CD8-positive, alpha-beta T cell (primary cell): ENCODE measurements at regions of chr16 and their contacts with region 1.

Region 1: GRCh38 chr16:1782352-1783091 is at the starts of genes NUBP2 and SPSB3:
- DNase-seq: peak; percentile 95 to 100 (median 98)
- ATAC-seq: peak; percentile 83
- H3K4me3 ChIP-seq: peak within 1 kb of the TSS; percentile 81 to 83
- H3K4me3 Mint-ChIP-seq: peak within 1 kb of the TSS; percentile 90
- H3K27ac ChIP-seq: peak within 1 kb of the TSS; percentile 73 to 86
- H3K27ac Mint-ChIP-seq: peak within 1 kb of the TSS; percentile 95
- H3K4me1 ChIP-seq: peaks cover 38% of the 10 kb centered on the region
- H3K4me1 Mint-ChIP-seq: peaks cover 29% of the 10 kb centered on the region
- H3K27me3 ChIP-seq: no peaks in the 10 kb centered on the region
- H3K27me3 Mint-ChIP-seq: no peaks in the 10 kb centered on the region
- CTCF ChIP-seq: no peak
- total RNA-seq, gene NUBP2: 33.1 to 39.2 TPM
- total RNA-seq, gene SPSB3: 70.3 to 72.3 TPM

Region 2: DNA sequence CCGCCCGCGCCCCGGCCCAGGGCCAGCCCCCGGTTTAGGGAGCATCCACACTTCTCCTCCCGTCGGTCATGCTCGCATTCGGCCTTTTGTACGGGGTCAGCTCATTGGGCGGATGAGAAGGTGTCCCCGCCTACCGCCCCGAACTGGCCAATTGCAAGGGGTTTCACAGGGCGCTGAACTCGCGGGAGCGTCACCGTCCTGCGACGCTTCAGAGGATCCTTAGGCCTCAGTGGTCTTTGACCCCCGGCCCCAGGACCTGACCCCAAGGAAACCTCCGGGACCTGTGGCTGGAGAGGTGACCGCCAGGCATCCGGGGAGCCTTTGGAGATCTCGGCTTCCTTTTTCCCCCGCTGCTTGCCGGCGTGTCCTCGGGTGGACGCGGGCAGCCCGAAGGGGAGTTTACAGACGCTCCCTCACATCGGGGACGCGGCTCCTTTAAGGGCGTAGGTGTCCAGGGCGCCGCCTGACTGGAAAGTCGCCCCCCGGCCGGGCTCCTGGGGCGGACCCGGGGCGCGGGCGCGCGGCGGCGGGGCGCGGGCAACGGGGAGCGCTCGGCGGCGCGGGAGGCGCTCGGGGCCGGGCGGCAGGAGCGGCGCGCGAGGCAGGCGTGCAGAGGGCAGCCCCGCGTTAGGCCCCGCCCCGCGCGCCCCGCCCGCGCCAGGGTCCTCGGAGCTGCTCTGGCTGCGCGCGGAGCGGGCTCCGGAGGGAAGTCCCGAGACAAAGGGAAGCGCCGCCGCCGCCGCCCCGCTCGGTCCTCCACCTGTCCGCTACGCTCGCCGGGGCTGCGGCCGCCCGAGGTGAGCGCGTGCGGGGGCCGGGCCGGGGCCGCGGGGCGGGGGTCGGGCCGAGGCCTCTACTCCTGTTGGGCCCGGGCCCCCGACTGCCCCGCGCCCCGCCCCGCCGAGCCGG is 473.3 kb before region 1 on chr16 and contains the start of gene UBE2I:
- CTCF ChIA-PET with region 1: no interaction called
- POLR2A ChIA-PET with region 1: interaction called, 5 read pairs
- intact Hi-C with region 1: loop called in 1 of 2 experiments (anchors 2 kb)
- DNase-seq: peak; percentile 96 to 99 (median 98)
- ATAC-seq: peak; percentile 73
- H3K4me3 ChIP-seq: peak within 1 kb of the TSS; percentile 82 to 95
- H3K4me3 Mint-ChIP-seq: peak within 1 kb of the TSS; percentile 92
- H3K27ac ChIP-seq: peak within 1 kb of the TSS; percentile 100
- H3K27ac Mint-ChIP-seq: peak within 1 kb of the TSS; percentile 100
- H3K4me1 ChIP-seq: peaks cover 50% of the 10 kb centered on the region
- H3K4me1 Mint-ChIP-seq: peaks cover 41% of the 10 kb centered on the region
- H3K27me3 ChIP-seq: no peaks in the 10 kb centered on the region
- H3K27me3 Mint-ChIP-seq: no peaks in the 10 kb centered on the region
- CTCF ChIP-seq: no peak
- total RNA-seq, gene UBE2I: 285 to 294 TPM

Region 3: DNA sequence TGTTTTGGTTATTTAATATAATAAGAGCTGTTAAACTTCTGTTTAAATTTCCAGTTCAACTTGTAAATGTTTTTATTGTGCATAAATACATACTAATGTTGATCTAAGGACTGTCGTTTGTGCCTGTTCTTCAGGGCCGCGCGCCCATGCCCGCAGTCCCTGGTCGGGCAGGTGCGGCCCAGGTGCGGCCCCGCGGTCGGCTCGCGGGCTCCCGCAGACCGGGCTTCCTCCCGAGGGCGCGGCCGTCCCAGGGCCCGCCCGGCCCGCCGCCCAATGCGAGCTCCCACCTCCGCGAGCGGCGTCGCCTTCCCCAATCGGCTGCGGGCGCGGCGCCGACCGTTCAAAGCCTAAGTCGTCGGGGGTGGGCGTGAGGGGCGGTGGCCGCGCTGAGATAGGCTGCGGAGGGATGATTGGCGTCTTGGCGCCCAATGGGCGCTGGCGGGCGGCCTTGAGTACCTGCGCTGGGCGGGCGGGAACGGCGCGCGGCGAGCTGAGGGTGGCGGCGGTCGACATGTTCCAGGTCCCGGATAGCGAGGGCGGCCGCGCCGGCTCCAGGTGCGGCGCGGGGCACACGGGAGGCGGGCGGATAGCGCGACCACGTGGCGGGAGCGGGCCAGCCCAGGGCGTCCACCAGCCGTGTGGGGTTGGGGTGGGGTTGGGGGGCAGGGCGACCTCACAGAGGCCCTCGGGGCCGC is 104.6 kb before region 1 on chr16 and contains the start of gene JPT2:
- CTCF ChIA-PET with region 1: no interaction called
- POLR2A ChIA-PET with region 1: no interaction called
- intact Hi-C with region 1: loop called in 1 of 2 experiments (anchors 1 kb)
- DNase-seq: peak; percentile 87 to 98 (median 95)
- ATAC-seq: peak; percentile 97
- H3K4me3 ChIP-seq: peak within 1 kb of the TSS; percentile 54 to 57
- H3K4me3 Mint-ChIP-seq: peak within 1 kb of the TSS; percentile 88
- H3K27ac ChIP-seq: peak within 1 kb of the TSS; percentile 31 to 37
- H3K27ac Mint-ChIP-seq: peak within 1 kb of the TSS; percentile 62
- H3K4me1 ChIP-seq: peaks cover 15% of the 10 kb centered on the region
- H3K4me1 Mint-ChIP-seq: peaks cover 27% of the 10 kb centered on the region
- H3K27me3 ChIP-seq: no peaks in the 10 kb centered on the region
- H3K27me3 Mint-ChIP-seq: no peaks in the 10 kb centered on the region
- CTCF ChIP-seq: no peak
- total RNA-seq, gene JPT2: 1.4 to 2.8 TPM

Region 4: GRCh38 chr16:1757714-1758404 is 24.7 kb before region 1 on chr16:
- CTCF ChIA-PET with region 1: no interaction called
- POLR2A ChIA-PET with region 1: no interaction called
- intact Hi-C with region 1: no loop called
- DNase-seq: no peak
- ATAC-seq: no peak
- H3K4me3 ChIP-seq: no peak overlapping the region
- H3K4me3 Mint-ChIP-seq: no peak overlapping the region
- H3K27ac ChIP-seq: no peak overlapping the region
- H3K27ac Mint-ChIP-seq: no peak overlapping the region
- H3K4me1 ChIP-seq: peaks cover 5% of the 10 kb centered on the region
- H3K4me1 Mint-ChIP-seq: peaks cover 6% of the 10 kb centered on the region
- H3K27me3 ChIP-seq: no peaks in the 10 kb centered on the region
- H3K27me3 Mint-ChIP-seq: no peaks in the 10 kb centered on the region
- CTCF ChIP-seq: no peak

Region 5: DNA sequence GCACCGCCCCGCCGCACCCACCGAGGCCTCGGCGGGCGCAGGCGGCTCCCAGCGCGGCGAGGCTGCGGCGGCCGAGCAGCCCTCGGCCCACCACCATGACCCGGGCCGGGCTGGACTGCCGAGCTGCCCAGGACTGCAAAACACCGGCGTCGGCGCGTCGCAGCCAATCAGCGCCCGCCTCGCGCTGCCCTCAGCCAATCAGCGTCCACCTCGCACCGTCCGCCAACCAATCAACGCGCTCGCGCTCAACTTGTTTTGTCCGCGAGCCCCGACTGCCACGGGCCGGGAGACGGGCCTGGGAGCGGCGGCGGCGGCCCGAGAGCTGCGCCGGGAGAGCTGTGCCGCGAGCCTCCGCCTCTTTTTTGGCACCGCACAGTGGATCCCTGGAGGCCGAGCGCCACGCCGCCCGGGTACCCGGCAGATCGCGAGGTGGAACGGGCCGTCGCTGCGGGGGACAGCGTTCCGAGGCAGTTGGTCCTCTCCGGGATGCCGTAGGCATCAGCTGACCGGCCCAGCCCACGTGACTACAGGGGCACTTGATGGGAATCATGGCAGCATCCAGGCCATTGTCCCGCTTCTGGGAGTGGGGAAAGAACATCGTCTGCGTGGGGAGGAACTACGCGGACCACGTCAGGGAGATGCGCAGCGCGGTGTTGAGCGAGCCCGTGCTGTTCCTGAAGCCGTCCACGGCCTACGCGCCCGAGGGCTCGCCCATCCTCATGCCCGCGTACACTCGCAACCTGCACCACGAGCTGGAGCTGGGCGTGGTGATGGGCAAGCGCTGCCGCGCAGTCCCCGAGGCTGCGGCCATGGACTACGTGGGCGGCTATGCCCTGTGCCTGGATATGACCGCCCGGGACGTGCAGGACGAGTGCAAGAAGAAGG is 44.4 kb after region 1 on chr16 and contains the starts of genes FAHD1 and HAGH:
- CTCF ChIA-PET with region 1: no interaction called
- POLR2A ChIA-PET with region 1: interaction called, 32 read pairs
- intact Hi-C with region 1: loop called (anchors 1 kb)
- DNase-seq: peak; percentile 83 to 96 (median 89)
- ATAC-seq: peak; percentile 79
- H3K4me3 ChIP-seq: peak within 1 kb of the TSS; percentile 72 to 91
- H3K4me3 Mint-ChIP-seq: peak within 1 kb of the TSS; percentile 90
- H3K27ac ChIP-seq: peak within 1 kb of the TSS; percentile 73 to 78
- H3K27ac Mint-ChIP-seq: peak within 1 kb of the TSS; percentile 95
- H3K4me1 ChIP-seq: peaks cover 46% of the 10 kb centered on the region
- H3K4me1 Mint-ChIP-seq: peaks cover 48% of the 10 kb centered on the region
- H3K27me3 ChIP-seq: no peaks in the 10 kb centered on the region
- H3K27me3 Mint-ChIP-seq: no peaks in the 10 kb centered on the region
- CTCF ChIP-seq: no peak
- total RNA-seq, gene FAHD1: 11.7 to 13.7 TPM
- total RNA-seq, gene HAGH: 32.5 to 41.1 TPM

Region 6: DNA sequence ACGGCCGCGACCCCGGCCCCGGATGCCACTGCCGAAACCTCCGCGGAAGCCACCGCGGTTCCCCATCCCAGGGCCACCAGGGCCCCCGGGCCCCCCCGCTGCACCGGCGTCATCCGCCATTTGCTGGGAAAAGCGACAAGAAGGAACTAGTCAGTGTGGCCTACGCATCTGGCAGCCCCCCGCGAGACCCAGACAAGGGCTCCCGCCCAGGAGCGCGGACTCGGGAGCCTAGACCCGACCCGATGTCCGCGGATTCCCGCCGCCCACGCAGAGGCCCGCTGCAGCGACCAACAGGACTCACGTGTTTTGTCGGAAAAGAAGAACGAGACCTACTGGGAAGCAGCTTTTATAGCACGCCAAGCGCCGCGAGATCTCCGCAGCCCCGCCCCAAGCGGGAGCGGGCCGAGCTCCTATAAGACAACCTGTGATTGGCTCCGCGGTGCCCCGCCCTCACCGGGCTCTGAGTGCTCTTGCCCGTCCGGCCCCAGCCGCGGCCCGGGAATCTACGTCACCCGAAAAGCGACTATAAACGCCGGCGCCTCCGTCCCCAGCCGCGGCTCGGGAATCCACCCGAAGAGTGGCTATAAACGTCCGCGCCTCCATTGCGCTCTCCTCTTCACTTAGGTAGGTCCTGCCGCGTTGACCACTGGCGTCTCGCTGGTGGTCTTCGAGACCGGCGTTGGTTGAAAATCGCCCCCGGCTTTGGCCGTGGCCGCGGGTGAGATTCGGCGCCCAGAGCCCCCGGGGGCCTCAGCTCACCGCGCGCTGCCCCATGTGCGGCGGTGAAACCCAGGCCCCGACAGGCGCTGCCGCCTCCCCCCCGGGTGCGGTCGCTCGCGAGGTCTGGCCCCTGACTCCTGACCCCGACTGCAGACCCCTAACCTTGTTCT is 182.2 kb after region 1 on chr16 and contains the start of gene RPS2:
- CTCF ChIA-PET with region 1: no interaction called
- POLR2A ChIA-PET with region 1: interaction called, 19 read pairs
- intact Hi-C with region 1: loop called in 1 of 2 experiments (anchors 1 kb)
- DNase-seq: peak; percentile 92 to 99 (median 98)
- ATAC-seq: peak; percentile 89
- H3K4me3 ChIP-seq: peak within 1 kb of the TSS; percentile 82 to 99
- H3K4me3 Mint-ChIP-seq: peak within 1 kb of the TSS; percentile 94
- H3K27ac ChIP-seq: peak within 1 kb of the TSS; percentile 98 to 99
- H3K27ac Mint-ChIP-seq: peak within 1 kb of the TSS; percentile 96
- H3K4me1 ChIP-seq: peaks cover 41% of the 10 kb centered on the region
- H3K4me1 Mint-ChIP-seq: peaks cover 45% of the 10 kb centered on the region
- H3K27me3 ChIP-seq: no peaks in the 10 kb centered on the region
- H3K27me3 Mint-ChIP-seq: no peaks in the 10 kb centered on the region
- CTCF ChIP-seq: no peak
- total RNA-seq, gene RPS2: 4,060 to 4,094 TPM

Region 7: GRCh38 chr16:1991948-1992703 is 209.6 kb after region 1 on chr16:
- CTCF ChIA-PET with region 1: no interaction called
- POLR2A ChIA-PET with region 1: no interaction called
- intact Hi-C with region 1: loop called in 1 of 2 experiments (anchors 2 kb)
- DNase-seq: peak; percentile 95 to 99 (median 97)
- ATAC-seq: peak; percentile 88
- H3K4me3 ChIP-seq: peak overlapping the region; percentile 53 to 60
- H3K4me3 Mint-ChIP-seq: peak overlapping the region; percentile 39
- H3K27ac ChIP-seq: peak overlapping the region; percentile 27 to 45
- H3K27ac Mint-ChIP-seq: peak overlapping the region; percentile 80
- H3K4me1 ChIP-seq: peaks cover 19% of the 10 kb centered on the region
- H3K4me1 Mint-ChIP-seq: peaks cover 26% of the 10 kb centered on the region
- H3K27me3 ChIP-seq: peaks cover 9 to 13% of the 10 kb centered on the region in 2 experiments
- H3K27me3 Mint-ChIP-seq: peaks cover 9% of the 10 kb centered on the region
- CTCF ChIP-seq: no peak

Region 8: GRCh38 chr16:2513405-2514322 is 731.1 kb after region 1 on chr16 and contains the start of gene ATP6V0C:
- CTCF ChIA-PET with region 1: no interaction called
- POLR2A ChIA-PET with region 1: no interaction called
- intact Hi-C with region 1: loop called in 1 of 2 experiments (anchors 10 kb)
- DNase-seq: peak; percentile 84 to 97 (median 92)
- ATAC-seq: peak; percentile 89
- H3K4me3 ChIP-seq: peak within 1 kb of the TSS; percentile 67 to 69
- H3K4me3 Mint-ChIP-seq: peak within 1 kb of the TSS; percentile 94
- H3K27ac ChIP-seq: peak within 1 kb of the TSS; percentile 91 to 94
- H3K27ac Mint-ChIP-seq: peak within 1 kb of the TSS; percentile 97
- H3K4me1 ChIP-seq: peaks cover 47% of the 10 kb centered on the region
- H3K4me1 Mint-ChIP-seq: peaks cover 49% of the 10 kb centered on the region
- H3K27me3 ChIP-seq: no peaks in the 10 kb centered on the region
- H3K27me3 Mint-ChIP-seq: no peaks in the 10 kb centered on the region
- CTCF ChIP-seq: no peak
- total RNA-seq, gene ATP6V0C: 260 TPM